Mammary epithelial cell (primary cell): ENCODE measurements at regions of chr2 and their contacts with region 1.

Region 1: GRCh38 chr2:60834270-60834962 is 47.0 kb upstream of the REL start:
- DNase-seq: no peak
- H3K4me3 ChIP-seq: no peak overlapping the region
- H3K27ac ChIP-seq: no peak overlapping the region
- H3K4me1 ChIP-seq: peaks cover 14% of the 10 kb centered on the region
- H3K27me3 ChIP-seq: no peaks in the 10 kb centered on the region
- CTCF ChIP-seq: no peak

Region 2: DNA sequence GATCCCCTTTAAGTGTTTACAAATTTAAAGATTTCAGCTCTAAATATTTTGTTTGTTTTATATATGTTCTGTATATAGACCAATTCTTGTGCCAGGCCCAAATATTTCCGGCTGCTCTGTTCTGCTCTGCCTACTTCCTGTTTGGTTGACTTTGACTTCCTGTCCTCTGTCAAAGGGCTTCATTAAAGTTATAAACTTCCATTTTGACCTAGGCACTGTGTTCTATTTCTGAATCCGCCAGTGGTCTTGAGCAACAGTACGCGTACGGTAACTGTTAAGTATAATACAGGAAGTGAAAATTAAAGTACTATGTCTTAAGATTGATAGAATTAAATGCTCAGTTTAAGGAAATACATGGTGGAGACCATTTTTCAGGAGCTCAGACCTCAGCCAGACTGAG is 33.4 kb after region 1 on chr2:
- CTCF ChIA-PET with region 1: no interaction called
- dilution Hi-C with region 1: loop called (anchors 5 kb)
- in situ Hi-C with region 1: no loop called
- intact Hi-C with region 1: no loop called
- DNase-seq: no peak
- H3K4me3 ChIP-seq: no peak overlapping the region
- H3K27ac ChIP-seq: no peak overlapping the region
- H3K4me1 ChIP-seq: peaks cover 3% of the 10 kb centered on the region
- H3K27me3 ChIP-seq: no peaks in the 10 kb centered on the region
- CTCF ChIP-seq: no peak